ENCODE measurements at regions of chr1 and their contacts with region 1.

Region 1: GRCh38 chr1:166975361-166976129 is at the start of gene ILDR2:
- DNase-seq: peak; percentile 50 to 94 (median 66)

Region 2: GRCh38 chr1:166838766-166839599 is 136.6 kb before region 1 on chr1 and contains the start of gene POGK:
- intact Hi-C with region 1: loop called (anchors 10 kb)
- DNase-seq: peak; percentile 89 to 99 (median 92)

Region 3: DNA sequence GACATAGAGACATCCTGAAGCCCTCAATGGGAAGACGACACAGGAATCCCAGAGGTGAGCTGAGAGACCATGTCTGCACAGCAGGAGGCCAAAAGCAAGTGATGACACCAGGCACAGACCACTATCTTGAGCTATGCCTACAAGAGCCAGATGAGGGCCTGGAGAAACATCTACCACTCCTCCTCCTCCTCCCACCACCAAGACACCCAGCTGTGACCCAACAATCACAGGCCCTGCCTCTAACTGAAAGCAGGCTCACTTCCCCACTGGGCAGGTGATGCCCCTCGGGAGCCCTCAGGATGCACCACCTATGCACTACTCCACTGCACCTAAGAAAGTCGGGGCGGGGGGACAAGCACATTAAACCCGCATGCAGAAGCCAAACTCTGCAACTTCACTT is 115.9 kb before region 1 on chr1:
- intact Hi-C with region 1: no loop called
- DNase-seq: peak in 1 of 10 donors; percentile 75

Region 4: DNA sequence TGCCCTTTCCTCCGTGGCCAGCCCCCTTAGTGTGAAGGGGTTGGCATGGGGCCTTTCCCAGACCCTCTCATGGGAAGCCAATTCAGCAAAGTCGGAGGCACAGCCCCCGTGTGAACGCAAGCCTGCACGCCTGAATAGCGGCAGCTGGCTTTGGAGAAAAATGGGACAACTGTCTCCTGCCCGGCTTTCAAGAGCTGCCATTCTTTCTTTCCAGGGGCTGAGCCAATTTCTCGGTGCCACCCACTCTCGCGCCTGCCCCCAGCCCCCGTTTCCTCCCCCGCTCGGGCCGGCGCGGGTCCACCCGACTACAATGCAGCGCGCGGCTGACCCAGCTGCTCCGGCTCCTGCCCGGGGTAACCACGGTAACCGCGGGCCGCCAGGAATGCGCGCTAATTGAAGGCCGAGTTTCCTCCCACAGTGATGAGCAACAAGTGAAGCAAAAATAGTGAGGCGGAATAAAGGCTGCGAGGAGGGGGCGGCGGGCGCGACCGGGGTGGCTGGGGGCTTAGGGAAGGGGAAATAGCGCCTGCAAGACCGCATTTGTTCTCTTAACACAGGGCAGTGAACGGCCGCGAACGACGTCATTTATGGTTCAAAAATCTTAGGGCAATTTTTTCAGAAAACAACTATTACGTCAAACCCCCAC is 28.0 kb before region 1 on chr1:
- intact Hi-C with region 1: loop called (anchors 1 kb)
- DNase-seq: peak; percentile 83 to 98 (median 86)